Panc1 (cell line): ENCODE measurements at regions of chr14 and their contacts with region 1.

Region 1: DNA sequence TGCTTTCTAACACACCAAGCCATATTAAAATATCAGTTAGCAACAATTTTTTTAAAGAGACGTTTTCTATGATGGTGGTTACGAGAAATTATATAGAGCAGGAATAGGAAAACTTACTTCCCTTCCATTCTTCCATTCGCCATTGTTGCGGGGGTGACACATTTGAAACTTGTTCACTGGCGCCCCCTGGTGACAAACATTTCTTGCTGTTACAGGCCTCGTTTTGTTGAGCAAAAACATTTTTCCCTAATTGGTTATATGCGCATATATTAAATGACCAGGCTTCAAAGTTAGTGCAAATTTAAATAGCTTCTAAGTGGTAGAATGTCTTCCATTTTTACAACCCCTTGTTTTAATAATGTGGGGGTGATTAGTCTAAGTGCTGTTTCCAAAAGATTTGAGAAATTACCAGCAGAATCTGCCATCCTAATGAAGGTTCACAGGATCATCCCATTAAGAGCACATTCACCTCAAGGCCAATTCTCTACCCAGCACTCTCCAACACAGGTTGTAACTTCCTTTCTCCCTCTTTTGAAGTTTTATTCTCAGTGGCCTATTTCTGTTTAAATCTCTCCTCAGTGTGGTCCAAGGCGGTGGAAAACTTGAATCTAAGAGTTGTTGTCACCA is 1124.7 kb downstream of the FLRT2 start:
- DNase-seq: peak; percentile 4
- ATAC-seq: no peak
- H3K4me3 ChIP-seq: no peak overlapping the region
- H3K27ac ChIP-seq: no peak overlapping the region
- H3K4me1 ChIP-seq: no peaks in the 10 kb centered on the region
- H3K27me3 ChIP-seq: no peaks in the 10 kb centered on the region
- CTCF ChIP-seq: peak; percentile 64

Region 2: GRCh38 chr14:86462193-86462753 is 192.4 kb before region 1 on chr14:
- CTCF ChIA-PET with region 1: no interaction called
- POLR2A ChIA-PET with region 1: no interaction called
- in situ Hi-C with region 1: no loop called
- intact Hi-C with region 1: loop called (anchors 10 kb)
- DNase-seq: no peak
- ATAC-seq: no peak
- H3K4me3 ChIP-seq: no peak overlapping the region
- H3K27ac ChIP-seq: no peak overlapping the region
- H3K4me1 ChIP-seq: no peaks in the 10 kb centered on the region
- H3K27me3 ChIP-seq: no peaks in the 10 kb centered on the region
- CTCF ChIP-seq: peak; percentile 37